Naive thymus-derived CD4-positive, alpha-beta T cell (primary cell): ENCODE measurements at regions of chr6 and their contacts with region 1.

Region 1: DNA sequence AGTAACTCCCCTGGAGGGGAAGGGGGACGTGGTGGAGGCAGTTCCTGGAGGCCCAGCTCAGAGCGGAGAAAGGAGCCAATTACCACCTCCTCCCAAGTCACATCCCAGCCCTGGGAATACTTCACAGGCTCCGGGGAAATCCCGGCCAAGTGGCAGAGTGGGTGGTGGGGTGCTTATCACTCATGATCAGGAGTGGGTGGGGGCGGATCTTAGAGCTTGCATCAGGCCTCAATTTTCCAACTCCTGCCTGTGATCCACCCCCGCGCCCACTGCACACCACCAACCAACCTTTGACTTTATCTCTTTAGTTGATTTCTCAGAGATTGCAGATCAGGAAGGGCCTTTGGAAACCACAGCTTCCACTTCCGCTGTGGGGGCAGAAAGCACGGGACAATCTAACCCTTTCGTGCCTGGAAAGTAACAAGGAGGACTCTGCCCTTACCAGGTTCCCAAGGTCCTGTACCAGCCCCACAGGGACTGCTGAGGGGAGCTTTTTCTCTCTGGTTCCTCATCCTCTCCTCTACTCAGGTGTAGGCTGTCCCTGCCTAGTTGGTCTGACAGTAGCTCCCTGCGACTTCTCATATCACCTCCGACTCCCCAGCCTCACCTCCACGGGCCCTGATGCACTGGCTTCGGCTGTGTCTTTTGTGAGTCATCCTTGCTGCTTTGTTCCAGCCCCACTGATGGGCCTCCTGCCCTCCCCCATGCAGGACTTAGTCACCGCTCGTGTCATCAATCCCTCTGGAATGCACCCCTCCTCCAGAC is 24.9 kb upstream of the IER3 start:
- DNase-seq: peak in 8 of 9 donors; percentile 47 to 85 (median 57)
- ATAC-seq: peak; percentile 81
- H3K4me3 ChIP-seq: peak overlapping the region; percentile 15
- H3K4me3 Mint-ChIP-seq: peak overlapping the region; percentile 55 to 84 (median 80)
- H3K27ac ChIP-seq: no peak overlapping the region
- H3K27ac Mint-ChIP-seq: peak overlapping the region; percentile 36 to 95 (median 86)
- H3K4me1 ChIP-seq: peaks cover 24 to 38% of the 10 kb centered on the region in 2 donors
- H3K4me1 Mint-ChIP-seq: peaks cover 38 to 90% (median 77%) of the 10 kb centered on the region in 7 donors
- H3K27me3 ChIP-seq: no peaks in the 10 kb centered on the region
- H3K27me3 Mint-ChIP-seq: no peaks in the 10 kb centered on the region

Region 2: DNA sequence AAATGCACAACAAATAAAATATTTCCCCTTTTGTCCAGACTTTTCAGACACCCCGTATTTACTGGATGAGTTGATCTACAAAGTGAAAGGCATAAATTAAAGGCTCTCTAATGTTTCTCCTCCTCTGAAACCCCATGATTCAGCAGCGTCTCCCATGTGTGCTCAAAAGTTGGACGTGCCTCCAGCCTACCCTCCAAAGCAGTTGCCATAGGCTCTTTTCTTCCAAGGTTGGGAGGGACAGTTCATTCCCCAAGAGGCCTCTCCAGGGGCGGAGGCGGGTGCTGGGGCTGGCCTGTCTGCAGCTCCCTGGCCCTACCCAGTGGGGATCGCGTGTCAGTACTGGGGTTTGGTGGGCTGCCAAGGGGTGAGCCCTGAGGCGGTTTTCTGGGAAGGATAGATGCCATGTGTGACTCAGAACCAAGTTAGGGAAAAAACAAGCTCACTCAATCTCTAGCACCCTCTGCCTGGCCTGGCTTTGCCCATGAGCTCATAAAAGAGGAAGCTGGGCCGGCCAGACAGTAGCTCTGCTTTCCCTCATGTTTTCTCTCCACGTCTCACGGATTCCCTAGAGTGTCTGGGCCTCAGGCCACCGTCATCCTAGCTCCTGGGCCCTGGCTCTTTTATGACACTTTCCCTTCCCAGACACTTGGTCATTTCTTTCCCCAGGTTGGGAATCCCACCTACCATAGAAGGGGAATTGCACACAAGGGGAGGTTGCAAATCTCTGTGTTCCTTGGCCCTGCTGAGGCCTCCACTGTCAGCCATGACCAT is 16.9 kb before region 1 on chr6:
- CTCF ChIA-PET with region 1: no interaction called
- POLR2A ChIA-PET with region 1: interaction called, 6 read pairs
- intact Hi-C with region 1: loop called in 1 of 2 experiments (anchors 1 kb)
- DNase-seq: no peak
- ATAC-seq: peak; percentile 54
- H3K4me3 ChIP-seq: no peak overlapping the region
- H3K4me3 Mint-ChIP-seq: no peak overlapping the region
- H3K27ac ChIP-seq: no peak overlapping the region
- H3K27ac Mint-ChIP-seq: no peak overlapping the region
- H3K4me1 ChIP-seq: no peaks in the 10 kb centered on the region
- H3K4me1 Mint-ChIP-seq: peaks cover 8 to 27% (median 20%) of the 10 kb centered on the region in 7 donors
- H3K27me3 ChIP-seq: no peaks in the 10 kb centered on the region
- H3K27me3 Mint-ChIP-seq: no peaks in the 10 kb centered on the region

Region 3: GRCh38 chr6:30781743-30782424 is 12.6 kb after region 1 on chr6:
- CTCF ChIA-PET with region 1: interaction called, 4 read pairs
- POLR2A ChIA-PET with region 1: interaction called, 10 read pairs
- intact Hi-C with region 1: loop called (anchors 1 to 2 kb)
- DNase-seq: peak in 2 of 9 donors; percentile 11 to 41
- ATAC-seq: peak; percentile 79
- H3K4me3 ChIP-seq: no peak overlapping the region
- H3K4me3 Mint-ChIP-seq: peak overlapping the region; percentile 28 to 79 (median 53)
- H3K27ac ChIP-seq: peak overlapping the region; percentile 26
- H3K27ac Mint-ChIP-seq: peak overlapping the region; percentile 23 to 83 (median 62)
- H3K4me1 ChIP-seq: peaks cover 0 to 24% of the 10 kb centered on the region in 2 donors
- H3K4me1 Mint-ChIP-seq: peaks cover 36 to 73% (median 70%) of the 10 kb centered on the region in 7 donors
- H3K27me3 ChIP-seq: no peaks in the 10 kb centered on the region
- H3K27me3 Mint-ChIP-seq: peaks cover 0 to 4% (median 0%) of the 10 kb centered on the region in 5 donors

Region 4: DNA sequence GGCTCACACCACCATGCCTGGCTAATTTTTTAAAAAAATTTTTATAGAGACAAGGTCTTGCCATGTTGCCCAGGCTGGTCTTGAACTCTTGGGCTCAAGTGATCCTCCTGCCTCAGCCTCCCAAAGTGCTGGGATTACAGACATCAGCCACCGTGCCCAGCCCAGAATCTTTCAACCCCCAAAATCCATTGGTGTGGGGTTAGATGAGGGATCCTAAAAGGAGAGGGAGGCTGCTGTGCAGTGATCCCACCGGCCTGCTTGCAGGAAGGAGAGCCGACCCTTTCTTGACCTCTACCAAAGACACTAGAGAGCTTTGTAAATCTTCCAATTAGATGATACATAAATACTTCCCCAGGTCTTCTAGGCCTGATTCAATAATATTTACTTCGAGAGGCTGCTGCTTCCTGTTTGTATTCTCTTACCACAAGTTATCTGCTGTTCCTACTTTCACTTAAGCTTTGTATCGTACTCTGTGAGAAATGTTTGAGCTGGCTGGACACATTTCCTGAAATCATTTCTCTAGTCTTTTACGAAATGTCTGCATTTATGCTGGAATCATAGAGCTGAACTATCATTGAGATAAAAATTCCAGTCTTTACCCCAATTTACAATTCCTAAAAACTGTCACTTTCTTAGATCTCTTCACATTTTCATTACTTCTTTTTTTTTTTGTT is 24.4 kb after region 1 on chr6:
- CTCF ChIA-PET with region 1: interaction called, 3 read pairs
- POLR2A ChIA-PET with region 1: interaction called, 11 read pairs
- intact Hi-C with region 1: loop called in 1 of 2 experiments (anchors 2 kb)
- DNase-seq: peak in 7 of 9 donors; percentile 22 to 69 (median 57)
- ATAC-seq: peak; percentile 94
- H3K4me3 ChIP-seq: peak overlapping the region; percentile 12
- H3K4me3 Mint-ChIP-seq: peak overlapping the region; percentile 64 to 85 (median 78)
- H3K27ac ChIP-seq: peak overlapping the region; percentile 71
- H3K27ac Mint-ChIP-seq: peak overlapping the region; percentile 90 to 99 (median 96)
- H3K4me1 ChIP-seq: peaks cover 16 to 27% of the 10 kb centered on the region in 2 donors
- H3K4me1 Mint-ChIP-seq: peaks cover 29 to 72% (median 58%) of the 10 kb centered on the region in 7 donors
- H3K27me3 ChIP-seq: no peaks in the 10 kb centered on the region
- H3K27me3 Mint-ChIP-seq: no peaks in the 10 kb centered on the region

Region 5: DNA sequence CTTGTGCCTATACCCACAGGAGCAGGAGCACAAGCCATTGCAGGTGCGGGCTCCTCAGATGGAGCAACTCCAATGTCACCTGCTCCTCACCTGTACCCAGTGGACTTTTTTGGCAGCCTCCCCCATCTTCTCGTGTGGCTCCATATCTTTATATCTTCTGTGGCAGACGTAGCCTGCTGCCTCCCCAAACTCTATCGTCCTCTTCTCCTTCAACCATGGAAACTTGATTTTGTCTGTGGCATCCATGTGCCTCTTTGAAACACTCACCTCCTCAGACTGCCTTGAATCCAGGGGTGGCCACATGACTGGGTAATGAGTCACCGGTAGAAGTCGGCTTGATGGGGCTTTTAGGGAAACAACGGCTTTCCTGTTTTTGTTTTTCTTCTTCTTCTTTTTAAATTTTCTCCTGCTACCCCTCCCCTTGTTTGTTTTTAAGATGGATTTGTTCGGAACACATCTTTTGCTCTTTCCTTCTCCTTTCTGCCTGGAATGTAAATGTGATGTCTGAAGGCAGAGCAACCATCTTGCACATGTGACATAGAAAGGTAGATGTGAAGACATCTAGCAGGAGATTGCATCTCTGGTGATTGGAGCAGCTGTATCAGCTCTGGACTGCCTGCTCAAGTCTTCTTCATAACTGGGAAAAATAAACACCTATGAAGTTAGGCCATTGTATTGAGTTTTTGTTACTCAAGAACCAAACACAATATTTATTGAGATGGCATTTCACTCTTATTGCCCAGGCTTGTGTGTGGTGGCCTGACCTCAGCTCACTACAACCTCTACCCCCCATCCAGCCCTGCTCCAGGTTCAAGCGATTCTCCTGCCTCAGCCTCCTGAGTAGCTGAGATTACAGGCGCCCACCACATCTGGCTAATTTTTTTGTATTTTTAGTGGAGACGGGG is 45.1 kb after region 1 on chr6:
- CTCF ChIA-PET with region 1: no interaction called
- POLR2A ChIA-PET with region 1: interaction called, 4 read pairs
- intact Hi-C with region 1: loop called in 1 of 2 experiments (anchors 1 kb)
- DNase-seq: peak in 2 of 9 donors; percentile 38 to 63
- ATAC-seq: peak; percentile 80
- H3K4me3 ChIP-seq: no peak overlapping the region
- H3K4me3 Mint-ChIP-seq: peak overlapping the region in 9 of 10 donors; percentile 12 to 70 (median 39)
- H3K27ac ChIP-seq: no peak overlapping the region
- H3K27ac Mint-ChIP-seq: peak overlapping the region; percentile 49 to 95 (median 83)
- H3K4me1 ChIP-seq: peaks cover 18 to 40% of the 10 kb centered on the region in 2 donors
- H3K4me1 Mint-ChIP-seq: peaks cover 39 to 85% (median 78%) of the 10 kb centered on the region in 7 donors
- H3K27me3 ChIP-seq: no peaks in the 10 kb centered on the region
- H3K27me3 Mint-ChIP-seq: no peaks in the 10 kb centered on the region

Region 6: DNA sequence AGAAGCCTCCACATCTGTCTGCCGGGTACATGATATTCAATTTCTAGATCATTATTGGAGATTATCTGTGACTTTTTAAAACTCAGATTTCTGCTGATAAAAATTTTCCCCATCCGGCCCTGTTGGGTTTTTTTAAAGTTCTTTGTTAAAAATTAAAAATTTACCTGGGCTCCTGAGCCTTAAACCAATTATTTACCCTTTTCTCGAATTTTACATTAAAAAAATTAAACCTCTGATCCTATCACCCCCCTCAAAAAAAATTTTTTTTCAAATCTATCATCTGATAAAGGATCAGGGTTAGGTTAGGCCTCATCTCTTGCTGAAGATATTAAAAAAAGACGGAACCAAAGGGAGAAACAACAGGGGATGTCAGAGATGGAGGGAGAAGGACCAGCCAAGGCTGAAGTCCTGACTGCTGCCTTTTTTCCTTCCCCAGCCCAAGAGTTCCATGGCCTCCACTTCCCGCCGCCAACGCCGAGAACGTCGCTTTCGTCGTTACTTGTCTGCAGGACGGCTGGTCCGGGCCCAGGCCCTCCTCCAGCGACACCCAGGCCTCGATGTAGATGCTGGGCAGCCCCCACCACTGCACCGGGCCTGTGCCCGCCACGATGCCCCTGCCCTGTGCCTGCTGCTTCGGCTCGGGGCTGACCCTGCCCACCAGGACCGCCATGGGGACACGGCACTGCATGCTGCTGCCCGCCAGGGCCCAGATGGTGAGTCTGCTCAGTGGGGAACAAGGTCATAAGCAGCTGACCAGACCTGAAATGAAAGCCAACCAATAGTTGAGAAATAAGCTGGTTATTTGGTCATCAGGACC is 778.7 kb after region 1 on chr6:
- CTCF ChIA-PET with region 1: no interaction called
- POLR2A ChIA-PET with region 1: no interaction called
- intact Hi-C with region 1: no loop called
- DNase-seq: no peak
- ATAC-seq: no peak
- H3K4me3 ChIP-seq: peak overlapping the region; percentile 68
- H3K4me3 Mint-ChIP-seq: peak overlapping the region; percentile 81 to 97 (median 91)
- H3K27ac ChIP-seq: peak overlapping the region; percentile 89
- H3K27ac Mint-ChIP-seq: peak overlapping the region; percentile 78 to 98 (median 95)
- H3K4me1 ChIP-seq: peaks cover 16 to 25% of the 10 kb centered on the region in 2 donors
- H3K4me1 Mint-ChIP-seq: peaks cover 22 to 49% (median 43%) of the 10 kb centered on the region in 7 donors
- H3K27me3 ChIP-seq: no peaks in the 10 kb centered on the region
- H3K27me3 Mint-ChIP-seq: no peaks in the 10 kb centered on the region